ENCODE measurements at regions of chrX and their contacts with region 1.

Region 1: DNA sequence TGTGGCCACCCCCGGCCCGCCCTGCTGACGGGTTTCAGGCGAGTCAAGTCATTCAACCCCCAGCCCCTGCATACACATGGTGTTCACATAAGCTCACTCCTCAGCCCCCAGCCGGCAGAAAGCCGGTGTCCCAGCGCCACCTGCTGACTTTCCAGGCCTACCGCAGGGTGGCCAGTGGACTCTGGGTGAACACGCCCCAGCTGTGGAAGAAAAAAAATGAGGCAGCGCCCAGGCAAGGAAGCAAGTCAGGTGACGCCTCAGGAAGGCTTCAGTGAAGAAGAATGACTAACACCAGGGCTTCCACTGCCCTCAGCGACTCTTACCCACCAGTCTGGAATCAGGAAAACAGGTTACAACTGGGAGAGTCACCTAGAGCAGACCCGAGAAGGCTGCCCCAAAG is 15.8 kb downstream of the BCAP31 start:
- DNase-seq: peak; percentile 68

Region 2: GRCh38 chrX:153599192-153600031 is 109.0 kb before region 1 on chrX:
- CTCF ChIA-PET with region 1: no interaction called
- POLR2A ChIA-PET with region 1: no interaction called
- DNase-seq: peak; percentile 98

Region 3: DNA sequence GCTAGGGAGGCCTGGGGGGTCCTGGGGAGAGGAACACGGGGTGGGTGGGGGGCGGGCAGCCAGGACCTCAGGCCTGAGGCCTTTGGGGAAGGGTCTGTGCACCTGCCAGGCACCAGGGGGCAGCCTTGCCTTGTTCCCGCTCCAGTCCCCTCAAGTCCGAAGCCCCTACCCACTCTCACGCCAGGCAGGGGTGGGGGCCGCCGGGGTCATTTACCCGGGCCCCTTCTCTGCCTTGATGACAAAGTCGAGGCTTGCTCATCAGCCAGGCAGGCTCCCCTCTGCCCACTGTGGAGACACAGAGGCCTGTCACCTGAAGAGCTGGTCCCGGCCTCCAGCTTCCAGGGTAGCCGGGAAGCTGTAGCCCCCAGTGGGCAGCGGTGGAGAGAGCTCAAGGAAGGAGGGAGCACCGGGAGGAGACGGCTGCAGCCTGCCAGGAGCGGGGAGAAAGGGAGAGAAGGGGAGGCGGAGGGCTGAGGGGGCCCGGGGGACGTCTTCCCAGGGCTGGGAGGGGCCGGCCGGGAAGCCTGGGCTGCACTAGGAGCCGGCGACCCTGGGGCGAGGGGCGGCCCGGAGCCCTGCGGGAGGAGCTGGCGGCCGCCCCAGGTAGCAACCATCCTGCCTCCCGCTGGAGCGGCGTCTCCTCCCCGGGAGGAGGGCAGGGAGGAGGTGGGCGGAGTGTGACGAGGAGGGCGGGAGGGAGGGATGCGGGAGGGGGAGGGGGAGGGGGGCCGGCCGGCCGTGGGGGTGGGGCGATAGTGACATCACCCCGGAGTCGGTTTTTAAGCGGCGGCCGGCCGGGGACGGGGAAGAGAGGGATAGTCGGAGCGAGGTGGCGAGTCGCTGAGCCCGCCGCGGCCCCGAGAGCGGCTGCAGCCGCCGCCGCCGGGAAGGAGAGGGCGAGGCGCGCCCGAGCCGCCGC is 21.0 kb before region 1 on chrX and contains the start of gene SLC6A8:
- CTCF ChIA-PET with region 1: interaction called, 16 read pairs
- POLR2A ChIA-PET with region 1: no interaction called
- DNase-seq: peak; percentile 75

Region 4: DNA sequence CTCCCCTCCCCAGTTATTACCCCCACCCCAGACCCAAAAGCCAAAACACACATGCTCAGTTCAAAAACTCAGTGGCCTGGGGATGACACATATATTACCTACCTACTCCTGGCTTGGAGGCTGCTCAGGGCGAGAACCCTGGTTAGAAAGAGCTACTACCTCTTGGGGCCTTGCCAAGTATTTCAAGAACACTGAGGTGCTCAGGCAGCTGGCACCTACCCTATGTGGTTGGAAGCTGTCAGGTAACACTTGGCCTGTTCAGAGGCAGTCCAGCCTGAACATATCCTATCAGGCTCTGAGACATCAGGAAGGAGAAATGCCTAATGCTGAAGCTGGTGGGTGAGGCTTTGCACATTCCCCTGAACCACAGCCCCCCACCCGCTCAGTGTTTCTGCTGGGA is 10.8 kb after region 1 on chrX:
- CTCF ChIA-PET with region 1: interaction called, 17 read pairs
- POLR2A ChIA-PET with region 1: interaction called, 5 read pairs
- DNase-seq: no peak

Measured in HEK293T (cell line).